Activated T-helper 2 cell treated with anti-CD3 and anti-CD28 coated beads, Interferon-gamma antibody, Interleukin-2, Interleukin-4, amounts not matched to agents 10 μg/mL and 5 μg/mL and 100 μg/mL, durations not matched to agents 14 hours and 24 hours and 36 hours (primary cell): ENCODE measurements at regions of chr6 and their contacts with region 1.

Region 1: GRCh38 chr6:109073344-109074132 is 21.1 kb downstream of the SESN1 start:
- DNase-seq: no peak
- H3K4me3 Mint-ChIP-seq: no peak overlapping the region
- H3K27ac Mint-ChIP-seq: no peak overlapping the region
- H3K4me1 Mint-ChIP-seq: peaks cover 21% of the 10 kb centered on the region
- H3K27me3 Mint-ChIP-seq: peaks cover 5% of the 10 kb centered on the region

Region 2: GRCh38 chr6:108541838-108542759 is 531.4 kb before region 1 on chr6:
- intact Hi-C with region 1: loop called (anchors 1 kb)
- DNase-seq: peak; percentile 53
- H3K4me3 Mint-ChIP-seq: no peak overlapping the region
- H3K27ac Mint-ChIP-seq: no peak overlapping the region
- H3K4me1 Mint-ChIP-seq: peaks cover 15% of the 10 kb centered on the region
- H3K27me3 Mint-ChIP-seq: peaks cover 42% of the 10 kb centered on the region

Region 3: GRCh38 chr6:108771421-108771820 is 302.1 kb before region 1 on chr6:
- intact Hi-C with region 1: no loop called
- DNase-seq: no peak
- H3K4me3 Mint-ChIP-seq: no peak overlapping the region
- H3K27ac Mint-ChIP-seq: no peak overlapping the region
- H3K4me1 Mint-ChIP-seq: peaks cover 4% of the 10 kb centered on the region
- H3K27me3 Mint-ChIP-seq: peaks cover 25% of the 10 kb centered on the region

Region 4: DNA sequence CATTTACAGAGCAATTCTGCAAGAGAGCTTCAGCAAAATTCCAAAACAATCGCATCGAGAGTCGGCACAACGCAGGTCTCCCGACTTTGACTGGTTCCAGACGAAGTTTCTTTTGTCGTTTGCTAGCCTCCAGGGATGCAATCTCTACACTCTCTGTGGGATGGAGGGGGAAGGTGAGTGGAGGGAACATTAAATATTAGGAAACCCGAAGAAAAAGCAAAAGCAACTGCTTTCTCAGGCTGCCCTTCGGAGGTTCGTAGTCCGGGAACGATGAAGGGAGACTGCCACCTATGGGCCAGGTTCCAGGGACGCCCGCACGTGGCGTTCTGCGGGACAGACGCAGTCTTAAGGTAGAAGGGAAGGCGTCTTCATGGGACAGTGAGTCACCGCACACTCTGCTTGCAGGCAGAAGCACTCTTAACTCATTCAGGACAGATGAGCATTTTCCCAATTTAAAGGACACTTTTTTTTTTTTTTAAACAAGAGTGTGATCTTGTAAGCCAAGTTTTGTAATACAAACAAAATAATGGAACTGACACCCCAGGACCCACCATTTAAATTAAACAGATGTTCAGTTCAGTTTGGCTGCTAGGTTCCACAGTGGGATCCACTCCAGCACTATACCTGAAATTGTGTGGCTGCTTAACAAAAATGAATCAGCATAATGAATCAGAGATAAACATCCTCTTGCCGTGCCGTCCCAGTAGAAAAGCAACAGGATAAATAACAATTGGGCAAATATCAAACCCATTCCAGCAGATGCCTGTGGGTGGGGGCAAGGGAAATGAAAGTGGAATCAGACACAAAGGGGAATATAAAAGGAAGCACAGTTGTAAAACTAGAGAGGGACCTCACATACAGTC is 291.1 kb before region 1 on chr6:
- intact Hi-C with region 1: loop called (anchors 2 kb)
- DNase-seq: peak; percentile 65
- H3K4me3 Mint-ChIP-seq: peak overlapping the region; percentile 55
- H3K27ac Mint-ChIP-seq: no peak overlapping the region
- H3K4me1 Mint-ChIP-seq: peaks cover 11% of the 10 kb centered on the region
- H3K27me3 Mint-ChIP-seq: peaks cover 66% of the 10 kb centered on the region

Region 5: GRCh38 chr6:108835218-108835850 is 238.2 kb before region 1 on chr6:
- intact Hi-C with region 1: loop called (anchors 2 kb)
- DNase-seq: peak; percentile 71
- H3K4me3 Mint-ChIP-seq: no peak overlapping the region
- H3K27ac Mint-ChIP-seq: no peak overlapping the region
- H3K4me1 Mint-ChIP-seq: peaks cover 26% of the 10 kb centered on the region
- H3K27me3 Mint-ChIP-seq: peaks cover 20% of the 10 kb centered on the region

Region 6: DNA sequence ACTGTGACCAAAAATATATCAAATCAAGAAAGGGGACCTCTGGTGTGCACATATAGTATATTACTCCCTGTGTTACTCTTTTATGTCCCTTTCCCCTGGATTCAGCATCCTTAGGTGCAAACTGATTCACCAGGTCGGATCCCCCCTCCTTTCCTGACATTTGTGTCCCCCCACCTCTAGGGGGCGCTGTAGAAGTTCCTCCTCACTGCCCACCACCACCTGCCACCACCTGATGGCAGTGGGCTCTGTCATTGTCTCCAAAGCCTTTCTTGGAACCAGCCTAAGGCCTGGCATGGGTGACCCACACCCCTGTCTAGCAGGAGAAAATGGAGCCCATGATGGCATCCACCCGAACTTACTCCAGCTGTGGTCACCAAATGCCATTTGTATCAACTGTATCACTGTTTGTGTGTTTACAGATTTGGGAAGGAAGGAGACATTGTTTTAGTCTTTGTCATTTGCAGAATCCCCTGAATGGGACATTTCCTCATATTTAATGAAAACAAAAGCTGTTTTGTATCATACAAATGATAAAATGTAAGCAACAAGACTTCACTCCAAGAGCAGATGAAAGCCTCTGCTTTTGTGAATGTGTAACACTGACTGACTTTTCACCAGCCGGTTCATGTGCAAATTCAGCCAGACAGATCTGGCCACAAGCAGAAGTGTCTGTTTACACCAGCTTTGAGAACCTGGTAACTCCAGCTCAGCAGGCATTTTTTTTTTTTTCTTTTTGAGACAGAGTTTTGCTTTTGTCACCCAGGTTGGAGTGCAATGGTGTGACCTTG is 159.1 kb before region 1 on chr6:
- intact Hi-C with region 1: loop called (anchors 5 kb)
- DNase-seq: no peak
- H3K4me3 Mint-ChIP-seq: no peak overlapping the region
- H3K27ac Mint-ChIP-seq: no peak overlapping the region
- H3K4me1 Mint-ChIP-seq: peaks cover 4% of the 10 kb centered on the region
- H3K27me3 Mint-ChIP-seq: peaks cover 47% of the 10 kb centered on the region

Region 7: GRCh38 chr6:109055771-109056235 is 17.7 kb before region 1 on chr6:
- intact Hi-C with region 1: no loop called
- DNase-seq: no peak
- H3K4me3 Mint-ChIP-seq: no peak overlapping the region
- H3K27ac Mint-ChIP-seq: no peak overlapping the region
- H3K4me1 Mint-ChIP-seq: peaks cover 20% of the 10 kb centered on the region
- H3K27me3 Mint-ChIP-seq: peaks cover 9% of the 10 kb centered on the region